Dendritic cell treated with granulocyte-macrophage colony-stimulating factor and Interleukin-4, amounts not matched to agents 40 ng/mL and 50 ng/mL, for 4 days (primary cell): ENCODE measurements at regions of chr5 and their contacts with region 1.

Region 1: GRCh38 chr5:56670118-56670483 is 145.2 kb upstream of the MAP3K1 start:
- H3K4me3 Mint-ChIP-seq: no peak overlapping the region
- H3K27ac Mint-ChIP-seq: peak overlapping the region; percentile 92
- H3K4me1 Mint-ChIP-seq: peaks cover 85% of the 10 kb centered on the region
- H3K27me3 Mint-ChIP-seq: no peaks in the 10 kb centered on the region

Region 2: GRCh38 chr5:56686337-56687195 is 16.5 kb after region 1 on chr5:
- intact Hi-C with region 1: loop called (anchors 2 kb)
- H3K4me3 Mint-ChIP-seq: peak overlapping the region; percentile 17
- H3K27ac Mint-ChIP-seq: peak overlapping the region; percentile 67
- H3K4me1 Mint-ChIP-seq: peaks cover 63% of the 10 kb centered on the region
- H3K27me3 Mint-ChIP-seq: no peaks in the 10 kb centered on the region

Region 3: GRCh38 chr5:56814963-56815658 is 145.0 kb after region 1 on chr5 and contains the start of gene MAP3K1:
- intact Hi-C with region 1: loop called (anchors 2 kb)
- H3K4me3 Mint-ChIP-seq: peak within 1 kb of the TSS; percentile 96
- H3K27ac Mint-ChIP-seq: peak within 1 kb of the TSS; percentile 96
- H3K4me1 Mint-ChIP-seq: peaks cover 31% of the 10 kb centered on the region
- H3K27me3 Mint-ChIP-seq: no peaks in the 10 kb centered on the region

Region 4: DNA sequence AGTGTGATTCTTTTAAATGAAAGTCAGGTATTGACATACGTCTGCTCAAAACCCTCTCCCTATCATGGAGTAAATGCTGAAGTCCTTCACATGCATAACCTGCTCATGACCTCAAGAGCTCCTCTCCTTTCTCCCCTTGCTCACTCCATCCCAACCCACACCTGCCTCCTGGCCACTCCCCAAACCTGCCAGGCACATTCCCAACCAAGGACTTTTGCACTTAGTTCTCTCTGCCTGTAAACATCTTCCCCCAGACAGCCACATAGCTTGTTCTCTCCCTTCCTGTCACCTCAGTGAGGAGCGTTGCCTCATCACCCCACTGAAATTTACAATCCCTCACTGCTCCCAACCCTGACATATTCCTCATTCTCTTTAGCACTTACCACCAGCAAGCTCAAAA is 248.0 kb after region 1 on chr5:
- intact Hi-C with region 1: no loop called
- H3K4me3 Mint-ChIP-seq: no peak overlapping the region
- H3K27ac Mint-ChIP-seq: no peak overlapping the region
- H3K4me1 Mint-ChIP-seq: no peaks in the 10 kb centered on the region
- H3K27me3 Mint-ChIP-seq: no peaks in the 10 kb centered on the region